OCI-LY7 (cell line): ENCODE measurements at regions of chr17 and their contacts with region 1.

Region 1: DNA sequence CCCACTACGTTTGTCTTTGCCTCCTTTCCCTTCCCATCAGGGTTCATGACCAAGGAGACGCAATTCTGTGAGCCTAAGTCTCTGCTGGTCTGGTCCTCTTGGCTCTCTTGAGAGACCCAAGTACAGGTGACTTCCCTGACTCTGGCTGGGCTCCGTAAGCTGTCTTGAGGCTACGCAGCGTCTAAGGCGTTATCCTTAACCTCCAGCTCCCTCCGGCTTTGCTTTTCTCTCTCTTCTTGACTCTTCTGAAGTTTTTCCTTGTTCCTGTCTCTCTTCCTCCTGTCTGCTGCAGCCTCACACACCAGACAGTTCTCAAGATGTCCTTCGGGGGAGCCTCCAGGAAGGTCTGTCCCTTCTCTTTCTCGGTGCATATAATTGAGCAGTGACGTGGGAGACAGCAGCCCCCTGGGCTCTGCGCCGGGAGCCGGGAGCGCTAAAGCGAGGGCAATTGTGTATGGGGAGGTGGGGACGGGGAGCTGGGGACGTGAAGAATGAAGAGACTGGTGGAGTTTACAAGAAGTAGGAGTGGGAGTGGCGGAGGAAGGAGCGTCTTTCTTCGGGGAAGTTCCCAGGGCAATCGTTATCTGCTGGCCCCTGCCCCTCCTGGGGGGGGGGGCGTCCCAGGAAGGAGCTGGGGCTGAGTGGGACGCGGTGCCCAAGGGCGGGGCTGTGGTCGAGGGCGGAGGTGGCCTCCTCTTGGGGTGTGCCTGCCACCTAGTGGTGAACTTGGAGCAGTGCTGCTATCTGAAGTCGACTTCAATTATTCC is 6.9 kb upstream of the PIRT start:
- DNase-seq: peak; percentile 70
- H3K4me3 ChIP-seq: peak overlapping the region; percentile 40
- H3K27ac ChIP-seq: no peak overlapping the region
- H3K4me1 ChIP-seq: no peaks in the 10 kb centered on the region
- CTCF ChIP-seq: peak; percentile 89

Region 2: DNA sequence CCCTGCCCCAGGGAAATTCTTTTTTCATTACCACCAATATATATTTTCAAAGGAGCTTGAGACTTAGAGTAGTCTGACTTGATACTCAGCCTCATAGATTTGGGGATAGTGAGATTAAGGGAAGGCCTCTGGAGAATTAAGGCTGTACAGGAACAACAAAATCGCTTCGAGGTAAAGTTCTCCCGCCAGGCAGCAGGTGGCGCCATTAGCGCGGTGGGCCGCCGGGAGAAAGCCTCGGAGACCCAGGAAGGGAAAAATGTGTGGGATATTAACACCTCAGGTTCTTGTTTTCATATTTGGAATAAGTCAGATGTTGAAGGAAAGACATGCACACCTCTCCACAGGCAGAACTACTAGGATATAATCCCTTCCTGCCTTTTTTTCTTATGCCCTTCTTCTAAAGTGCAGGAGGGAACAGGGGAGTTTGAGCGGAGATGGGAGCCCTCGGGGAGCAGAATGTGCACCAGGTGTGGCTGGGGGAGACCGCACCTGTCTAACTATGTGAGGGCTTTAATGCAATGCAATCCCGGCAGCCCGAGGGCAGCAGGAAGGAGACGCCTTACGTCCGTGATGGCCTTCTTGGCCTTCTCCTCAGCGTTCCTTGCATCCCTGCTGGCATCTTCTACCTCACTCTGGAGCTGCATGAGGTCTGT is 213.6 kb before region 1 on chr17:
- CTCF ChIA-PET with region 1: no interaction called
- POLR2A ChIA-PET with region 1: no interaction called
- intact Hi-C with region 1: loop called (anchors 5 kb)
- DNase-seq: no peak
- H3K4me3 ChIP-seq: no peak overlapping the region
- H3K27ac ChIP-seq: no peak overlapping the region
- H3K4me1 ChIP-seq: peaks cover 22% of the 10 kb centered on the region
- CTCF ChIP-seq: peak; percentile 93

Region 3: DNA sequence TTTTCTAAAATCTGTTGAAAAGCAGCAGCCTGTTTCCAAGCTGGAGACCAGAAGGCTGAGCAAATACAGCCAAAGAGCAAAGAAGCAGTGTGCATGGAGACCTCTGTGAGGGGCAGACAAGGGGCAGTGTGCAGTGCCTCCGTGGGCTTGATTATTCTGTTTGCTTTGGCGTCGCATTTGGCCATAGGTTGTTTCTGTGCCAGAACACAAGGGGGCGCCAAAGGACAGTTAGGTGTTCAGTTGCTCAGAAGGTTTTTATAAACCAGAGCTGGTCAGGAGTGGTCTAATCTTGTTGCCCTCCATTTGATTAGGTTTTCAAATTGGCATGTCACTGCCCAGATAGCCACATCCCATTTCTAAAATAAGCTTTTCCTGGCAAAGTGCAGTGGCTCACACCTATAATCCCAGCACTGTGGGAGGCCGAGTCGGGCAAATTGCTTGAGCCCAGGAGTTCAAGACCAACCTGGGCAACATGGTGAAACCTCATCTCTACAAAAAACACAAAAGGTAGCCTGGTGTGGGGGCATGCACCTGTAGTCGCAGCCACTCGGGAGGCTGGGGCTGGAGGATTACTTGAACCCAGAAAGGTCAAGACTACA is 198.3 kb before region 1 on chr17:
- CTCF ChIA-PET with region 1: interaction called, 3 read pairs
- POLR2A ChIA-PET with region 1: interaction called, 3 read pairs
- intact Hi-C with region 1: loop called (anchors 1 kb)
- DNase-seq: peak; percentile 71
- H3K4me3 ChIP-seq: no peak overlapping the region
- H3K27ac ChIP-seq: no peak overlapping the region
- H3K4me1 ChIP-seq: no peaks in the 10 kb centered on the region
- CTCF ChIP-seq: peak; percentile 86